Transverse colon (tissue), 4 donors: ENCODE measurements at regions of chr11 and their contacts with region 1.

Region 1: GRCh38 chr11:48270621-48271020 is 7.0 kb downstream of the OR4X1 start:
- DNase-seq: no peak
- H3K4me3 ChIP-seq: no peak overlapping the region
- H3K27ac ChIP-seq: no peak overlapping the region
- H3K4me1 ChIP-seq: no peaks in the 10 kb centered on the region
- H3K27me3 ChIP-seq: no peaks in the 10 kb centered on the region
- CTCF ChIP-seq: no peak
- EP300 ChIP-seq: no peak
- POLR2A ChIP-seq: no peak

Region 2: DNA sequence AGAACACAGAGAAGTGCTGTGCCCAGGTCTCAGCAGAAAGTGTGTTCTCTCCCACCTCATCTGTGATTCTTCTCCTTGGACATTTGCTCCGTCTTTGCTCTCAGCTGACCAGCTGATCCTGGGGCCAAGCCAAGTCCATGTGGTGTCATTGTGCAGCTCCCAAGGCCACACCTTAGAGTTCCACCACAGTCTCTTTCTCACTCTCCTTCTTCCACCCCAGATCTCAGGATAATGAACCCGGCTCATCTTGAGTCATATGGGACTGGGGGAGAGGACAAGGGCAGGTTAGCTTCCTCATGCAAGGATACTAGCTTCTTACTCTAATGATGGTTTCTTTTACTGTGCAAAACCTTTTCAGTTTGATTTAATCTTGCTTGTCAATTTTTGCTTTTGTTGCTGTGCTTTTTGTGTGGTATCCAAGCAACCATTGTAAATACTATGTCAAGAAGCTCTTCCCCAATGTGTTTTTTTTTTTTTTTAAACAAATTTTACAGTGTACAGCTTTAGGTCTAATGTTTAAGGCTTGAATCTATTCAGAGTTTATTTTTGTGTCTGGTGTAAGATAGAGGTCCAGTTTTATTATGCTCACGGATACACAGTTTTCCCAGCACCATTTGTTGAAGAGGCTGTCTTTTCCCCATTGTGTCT is 129.0 kb before region 1 on chr11:
- in situ Hi-C with region 1: no loop called
- intact Hi-C with region 1: no loop called
- DNase-seq: no peak
- H3K4me3 ChIP-seq: no peak overlapping the region
- H3K27ac ChIP-seq: no peak overlapping the region
- H3K4me1 ChIP-seq: peaks cover 0 to 21% (median 6%) of the 10 kb centered on the region in 4 donors
- H3K27me3 ChIP-seq: no peaks in the 10 kb centered on the region
- CTCF ChIP-seq: no peak
- EP300 ChIP-seq: no peak
- POLR2A ChIP-seq: no peak

Region 3: DNA sequence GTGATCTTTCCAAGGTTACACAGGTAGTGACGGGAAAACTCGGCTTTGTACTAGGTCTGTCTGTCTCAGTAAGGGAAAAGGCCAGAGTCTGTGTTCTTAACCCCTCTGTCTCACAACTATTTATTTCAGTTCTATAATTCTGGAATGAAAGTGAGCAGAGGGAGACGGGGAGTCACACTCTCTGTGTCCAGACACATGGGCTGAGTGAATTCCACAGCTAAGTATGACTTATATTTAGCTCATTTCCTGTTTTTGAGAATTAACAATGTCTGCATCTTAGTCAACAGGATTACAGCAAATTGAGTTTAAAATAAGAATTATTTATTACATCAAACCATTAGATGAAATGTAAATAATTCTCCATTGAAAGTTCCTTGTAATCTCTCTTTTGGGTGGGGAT is 116.5 kb before region 1 on chr11:
- in situ Hi-C with region 1: no loop called
- intact Hi-C with region 1: no loop called
- DNase-seq: no peak
- H3K4me3 ChIP-seq: no peak overlapping the region
- H3K27ac ChIP-seq: no peak overlapping the region
- H3K4me1 ChIP-seq: no peaks in the 10 kb centered on the region
- H3K27me3 ChIP-seq: no peaks in the 10 kb centered on the region
- CTCF ChIP-seq: no peak
- EP300 ChIP-seq: no peak
- POLR2A ChIP-seq: no peak

Region 4: GRCh38 chr11:48172818-48173609 is 97.6 kb before region 1 on chr11:
- in situ Hi-C with region 1: no loop called
- intact Hi-C with region 1: no loop called
- DNase-seq: peak; percentile 61
- H3K4me3 ChIP-seq: no peak overlapping the region
- H3K27ac ChIP-seq: no peak overlapping the region
- H3K4me1 ChIP-seq: peaks cover 0 to 20% (median 4%) of the 10 kb centered on the region in 4 donors
- H3K27me3 ChIP-seq: no peaks in the 10 kb centered on the region
- CTCF ChIP-seq: peak; percentile 71 to 88 (median 79)
- EP300 ChIP-seq: no peak
- POLR2A ChIP-seq: no peak

Region 5: DNA sequence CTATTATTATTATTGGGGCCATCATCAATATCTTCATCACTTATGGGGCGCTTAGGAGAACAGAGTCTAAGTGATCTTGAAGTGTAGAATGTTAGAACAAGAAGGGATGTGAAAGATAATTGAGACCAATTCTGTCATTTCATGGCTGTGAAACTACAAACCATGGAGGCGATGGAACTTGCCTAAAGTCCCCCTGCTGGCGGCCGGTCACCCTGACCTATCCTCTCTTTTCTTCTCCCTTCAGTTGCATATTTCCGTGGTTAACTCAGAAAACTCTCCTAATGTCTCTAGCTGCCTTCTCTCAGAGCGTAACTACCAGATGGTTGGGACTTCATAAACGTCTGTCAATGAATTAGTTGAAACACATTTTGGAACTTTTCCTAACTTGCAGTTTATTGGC is 60.6 kb before region 1 on chr11:
- in situ Hi-C with region 1: loop called in 1 of 4 experiments (anchors 10 kb)
- intact Hi-C with region 1: no loop called
- DNase-seq: no peak
- H3K4me3 ChIP-seq: no peak overlapping the region
- H3K27ac ChIP-seq: no peak overlapping the region
- H3K4me1 ChIP-seq: no peaks in the 10 kb centered on the region
- H3K27me3 ChIP-seq: no peaks in the 10 kb centered on the region
- CTCF ChIP-seq: peak in 1 of 5 experiments; percentile 6
- EP300 ChIP-seq: no peak
- POLR2A ChIP-seq: no peak

Region 6: GRCh38 chr11:48242501-48242900 is 28.1 kb before region 1 on chr11:
- in situ Hi-C with region 1: no loop called
- intact Hi-C with region 1: loop called (anchors 1 kb)
- DNase-seq: no peak
- H3K4me3 ChIP-seq: no peak overlapping the region
- H3K27ac ChIP-seq: no peak overlapping the region
- H3K4me1 ChIP-seq: no peaks in the 10 kb centered on the region
- H3K27me3 ChIP-seq: no peaks in the 10 kb centered on the region
- CTCF ChIP-seq: no peak
- EP300 ChIP-seq: no peak
- POLR2A ChIP-seq: no peak